Posterior cingulate gyrus (tissue), 11 donors: ENCODE measurements at regions of chr21 and their contacts with region 1.

Region 1: DNA sequence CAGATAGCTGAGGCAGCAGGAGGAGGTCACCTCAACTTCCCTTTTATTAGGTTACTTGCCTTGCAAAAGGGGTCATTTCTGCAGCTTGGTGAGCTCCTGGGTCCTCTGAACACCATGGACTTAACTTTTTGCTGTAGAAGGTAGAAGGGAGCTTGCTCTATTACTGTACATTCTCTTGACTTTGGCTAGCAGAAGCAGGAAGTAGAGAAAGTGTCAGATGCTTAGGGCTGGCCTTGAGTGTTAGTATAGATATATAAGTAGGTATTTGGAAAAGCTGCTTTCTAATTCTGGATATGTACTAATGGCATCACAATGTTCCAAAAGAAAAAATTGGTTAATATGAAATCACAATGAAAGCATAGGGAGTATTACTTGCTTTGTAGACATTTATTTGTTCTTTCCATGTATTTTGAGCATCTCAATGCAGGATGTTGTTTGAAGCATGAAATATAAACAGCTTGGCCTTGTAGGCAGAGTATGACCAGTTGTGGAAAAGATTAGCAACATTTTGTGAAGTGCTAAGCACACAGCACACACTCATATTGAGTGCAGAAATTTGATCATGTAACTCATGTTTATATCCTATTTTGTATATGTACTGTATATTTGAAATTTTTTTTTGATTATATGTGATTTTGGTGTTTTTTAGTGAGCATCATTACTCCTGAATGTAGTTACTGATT is 108.8 kb downstream of the DYRK1A start:
- DNase-seq: no peak

Region 2: GRCh38 chr21:37292941-37293340 is 182.4 kb before region 1 on chr21:
- intact Hi-C with region 1: no loop called
- DNase-seq: no peak

Region 3: GRCh38 chr21:37525810-37526209 is 50.5 kb after region 1 on chr21:
- intact Hi-C with region 1: loop called (anchors 2 kb)
- DNase-seq: no peak